Activated CD4-positive, alpha-beta T cell treated with anti-CD3 and anti-CD28 coated beads for 36 hours (primary cell): ENCODE measurements at regions of chr17 and their contacts with region 1.

Region 1: DNA sequence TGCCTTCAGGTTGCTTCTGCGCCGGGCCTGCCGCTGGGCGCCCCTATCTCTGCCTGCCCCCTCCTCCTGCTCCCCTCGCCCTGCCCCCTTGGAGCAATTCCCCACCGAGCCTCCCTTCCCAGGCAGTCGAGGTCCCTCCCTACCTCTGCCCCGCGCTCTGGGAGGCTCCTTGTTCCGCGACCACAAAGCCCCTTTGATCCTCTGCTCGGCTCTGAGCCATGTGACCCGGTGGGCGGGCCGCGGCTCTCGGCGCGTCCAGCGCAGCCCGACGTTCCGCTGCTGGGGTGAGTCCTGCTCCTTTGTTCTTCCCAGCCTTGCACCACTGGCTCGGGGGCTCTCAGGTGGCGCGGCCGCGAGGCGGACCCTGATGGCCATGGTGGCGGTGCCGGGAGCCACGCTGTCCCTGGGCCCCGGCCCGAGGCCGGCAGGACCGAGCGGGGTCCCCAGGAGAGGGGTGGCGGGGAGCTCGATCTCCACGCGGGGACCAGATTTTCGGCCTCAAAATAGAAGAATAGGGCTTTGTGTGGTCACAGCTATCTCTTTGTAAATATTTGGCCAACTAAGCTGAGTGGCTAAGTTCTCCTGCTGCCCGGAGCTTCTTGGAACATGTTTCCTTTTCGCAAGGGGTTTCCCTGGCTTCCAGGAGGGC is 310.6 kb downstream of the SEC14L1 start:
- DNase-seq: peak; percentile 85
- ATAC-seq: peak; percentile 24
- H3K4me3 Mint-ChIP-seq: peak overlapping the region; percentile 96
- H3K27ac Mint-ChIP-seq: peak overlapping the region; percentile 98
- H3K4me1 Mint-ChIP-seq: peaks cover 47% of the 10 kb centered on the region
- H3K27me3 Mint-ChIP-seq: no peaks in the 10 kb centered on the region

Region 2: GRCh38 chr17:76726231-76726775 is 725.1 kb before region 1 on chr17 and contains the start of gene JMJD6:
- CTCF ChIA-PET with region 1: no interaction called
- POLR2A ChIA-PET with region 1: no interaction called
- intact Hi-C with region 1: loop called in 1 of 2 experiments (anchors 5 kb)
- DNase-seq: peak; percentile 97
- ATAC-seq: peak; percentile 87
- H3K4me3 Mint-ChIP-seq: peak within 1 kb of the TSS; percentile 97
- H3K27ac Mint-ChIP-seq: peak within 1 kb of the TSS; percentile 98
- H3K4me1 Mint-ChIP-seq: peaks cover 54% of the 10 kb centered on the region
- H3K27me3 Mint-ChIP-seq: no peaks in the 10 kb centered on the region
- total RNA-seq, gene JMJD6: 51.3 to 65.5 TPM

Region 3: GRCh38 chr17:76982408-76983074 is 468.8 kb before region 1 on chr17:
- CTCF ChIA-PET with region 1: no interaction called
- POLR2A ChIA-PET with region 1: no interaction called
- intact Hi-C with region 1: no loop called
- DNase-seq: peak; percentile 32
- ATAC-seq: peak; percentile 47
- H3K4me3 Mint-ChIP-seq: no peak overlapping the region
- H3K27ac Mint-ChIP-seq: peak overlapping the region; percentile 70
- H3K4me1 Mint-ChIP-seq: peaks cover 20% of the 10 kb centered on the region
- H3K27me3 Mint-ChIP-seq: no peaks in the 10 kb centered on the region

Region 4: DNA sequence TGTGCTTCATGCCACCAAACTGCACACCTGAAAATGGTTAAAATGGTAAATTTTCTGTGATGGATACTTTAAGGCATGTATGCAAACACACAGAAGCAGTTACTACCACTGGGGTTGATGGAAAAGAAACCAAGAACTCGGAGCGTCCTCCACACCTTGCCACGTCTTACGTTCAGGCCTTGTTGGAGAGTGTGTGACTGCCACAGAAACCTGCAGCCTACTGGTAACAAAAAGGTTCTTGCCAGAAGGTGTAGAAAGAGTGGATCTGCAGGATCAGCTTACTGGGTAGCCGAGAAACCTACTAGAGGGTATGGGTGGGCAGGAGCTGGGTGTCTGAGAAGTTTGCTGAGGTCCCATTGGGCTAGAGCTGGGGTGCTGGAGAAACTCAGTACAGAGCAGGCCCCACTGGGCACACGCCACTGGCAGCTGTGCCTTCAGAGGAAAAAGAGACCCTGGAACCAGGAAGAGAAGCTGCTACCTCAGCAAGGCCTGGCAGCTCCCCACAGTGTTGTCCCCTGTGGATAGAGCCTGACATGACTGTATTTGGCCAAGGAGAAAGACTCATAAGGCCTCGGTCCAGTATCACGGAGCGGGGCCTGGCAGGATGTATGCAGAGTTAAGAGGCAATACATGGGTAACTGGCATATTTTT is 106.0 kb before region 1 on chr17:
- CTCF ChIA-PET with region 1: no interaction called
- POLR2A ChIA-PET with region 1: no interaction called
- intact Hi-C with region 1: no loop called
- DNase-seq: no peak
- ATAC-seq: no peak
- H3K4me3 Mint-ChIP-seq: no peak overlapping the region
- H3K27ac Mint-ChIP-seq: no peak overlapping the region
- H3K4me1 Mint-ChIP-seq: peaks cover 51% of the 10 kb centered on the region
- H3K27me3 Mint-ChIP-seq: no peaks in the 10 kb centered on the region

Region 5: DNA sequence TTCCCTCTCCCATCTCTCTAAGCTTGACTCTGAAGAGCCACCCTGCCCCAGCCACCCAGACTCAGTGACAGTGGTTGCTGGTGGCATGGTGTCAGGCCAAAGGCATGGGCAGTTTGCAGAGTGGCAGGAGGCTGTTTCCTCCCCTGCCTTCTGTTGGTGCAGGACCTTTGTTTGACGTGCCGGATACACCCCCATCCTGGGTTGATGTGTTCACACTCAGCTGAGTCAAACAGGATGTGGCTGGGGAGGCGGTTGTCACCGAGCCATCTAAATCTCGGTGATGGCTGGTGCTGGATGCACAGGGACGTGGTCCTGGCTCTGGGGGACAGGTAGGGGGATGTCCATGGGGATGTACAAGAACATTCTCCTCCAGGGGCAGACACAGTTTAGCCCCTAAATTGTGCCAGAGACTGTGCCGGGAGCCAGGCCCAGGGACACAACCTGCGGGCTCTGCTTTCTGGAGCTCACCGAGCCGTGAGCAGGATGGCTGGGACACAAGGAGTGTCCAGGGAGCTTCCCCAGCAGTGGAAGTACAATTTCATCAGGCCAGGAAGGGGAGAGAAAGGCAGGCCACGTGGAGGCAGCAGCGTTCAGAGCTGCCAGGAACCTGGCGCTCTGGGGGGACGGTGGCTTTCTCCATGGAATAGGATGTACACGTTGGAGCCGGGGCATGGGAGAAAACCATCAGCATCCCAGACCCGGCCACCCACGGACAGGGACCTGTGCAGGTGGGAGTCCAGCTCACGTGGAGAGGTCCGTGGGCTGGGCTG is 46.4 kb before region 1 on chr17:
- CTCF ChIA-PET with region 1: interaction called, 15 read pairs
- POLR2A ChIA-PET with region 1: no interaction called
- intact Hi-C with region 1: loop called (anchors 2 to 5 kb)
- DNase-seq: peak; percentile 93
- ATAC-seq: peak; percentile 79
- H3K4me3 Mint-ChIP-seq: peak overlapping the region; percentile 95
- H3K27ac Mint-ChIP-seq: peak overlapping the region; percentile 89
- H3K4me1 Mint-ChIP-seq: peaks cover 95% of the 10 kb centered on the region
- H3K27me3 Mint-ChIP-seq: no peaks in the 10 kb centered on the region

Region 6: GRCh38 chr17:77465358-77466041 is 14.1 kb after region 1 on chr17:
- CTCF ChIA-PET with region 1: interaction called, 8 read pairs
- POLR2A ChIA-PET with region 1: interaction called, 5 read pairs
- intact Hi-C with region 1: loop called in 1 of 2 experiments (anchors 1 kb)
- DNase-seq: peak; percentile 90
- ATAC-seq: peak; percentile 83
- H3K4me3 Mint-ChIP-seq: peak overlapping the region; percentile 62
- H3K27ac Mint-ChIP-seq: peak overlapping the region; percentile 98
- H3K4me1 Mint-ChIP-seq: peaks cover 90% of the 10 kb centered on the region
- H3K27me3 Mint-ChIP-seq: no peaks in the 10 kb centered on the region

Region 7: DNA sequence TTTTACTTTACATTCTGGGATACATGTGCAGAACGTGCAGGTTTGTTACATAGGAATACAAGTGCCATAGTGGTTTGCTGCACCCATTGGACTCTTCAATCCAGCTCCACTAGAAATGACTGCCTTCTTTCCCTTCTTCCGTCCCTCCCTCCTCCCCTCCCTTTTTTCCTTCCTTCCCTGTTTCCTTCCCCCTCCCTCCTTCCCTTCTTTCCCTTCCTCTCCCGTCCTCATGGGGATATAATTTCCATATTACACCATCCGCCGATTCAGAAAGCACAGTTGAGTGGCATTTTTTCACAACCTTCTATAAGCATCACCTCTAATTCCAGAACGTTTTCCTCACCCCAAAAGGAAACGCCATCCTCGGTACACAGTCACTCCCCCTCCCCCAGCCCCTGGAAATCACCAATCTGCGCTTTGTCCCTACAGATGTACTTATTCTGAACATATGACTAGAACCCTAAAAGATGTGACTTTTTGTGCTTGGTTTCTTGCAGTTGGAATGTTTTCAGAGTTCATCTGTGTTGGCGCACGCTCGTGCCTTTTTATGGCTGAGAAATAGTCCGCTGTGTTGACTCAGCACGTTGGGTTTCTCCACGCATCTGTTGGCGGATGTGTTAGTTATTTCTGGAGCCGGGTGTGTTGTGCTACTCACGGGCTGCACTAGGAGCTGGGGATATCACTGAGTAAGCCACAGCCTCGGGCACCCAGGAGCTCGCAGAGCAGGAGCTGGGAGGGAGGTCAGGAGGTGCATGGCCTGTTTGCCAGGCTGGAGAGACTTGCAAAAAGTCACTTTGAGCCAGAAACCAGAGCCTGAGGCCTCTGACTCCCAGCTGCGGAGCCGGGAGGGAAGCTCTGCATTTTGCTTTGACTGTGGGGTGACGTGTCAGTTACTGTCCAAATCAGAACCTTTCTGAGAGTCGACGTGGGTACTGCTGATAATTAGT is 25.8 kb after region 1 on chr17:
- CTCF ChIA-PET with region 1: interaction called, 21 read pairs
- POLR2A ChIA-PET with region 1: interaction called, 4 read pairs
- intact Hi-C with region 1: no loop called
- DNase-seq: peak; percentile 74
- ATAC-seq: peak; percentile 33
- H3K4me3 Mint-ChIP-seq: peak overlapping the region; percentile 24
- H3K27ac Mint-ChIP-seq: peak overlapping the region; percentile 80
- H3K4me1 Mint-ChIP-seq: peaks cover 78% of the 10 kb centered on the region
- H3K27me3 Mint-ChIP-seq: no peaks in the 10 kb centered on the region

Region 8: DNA sequence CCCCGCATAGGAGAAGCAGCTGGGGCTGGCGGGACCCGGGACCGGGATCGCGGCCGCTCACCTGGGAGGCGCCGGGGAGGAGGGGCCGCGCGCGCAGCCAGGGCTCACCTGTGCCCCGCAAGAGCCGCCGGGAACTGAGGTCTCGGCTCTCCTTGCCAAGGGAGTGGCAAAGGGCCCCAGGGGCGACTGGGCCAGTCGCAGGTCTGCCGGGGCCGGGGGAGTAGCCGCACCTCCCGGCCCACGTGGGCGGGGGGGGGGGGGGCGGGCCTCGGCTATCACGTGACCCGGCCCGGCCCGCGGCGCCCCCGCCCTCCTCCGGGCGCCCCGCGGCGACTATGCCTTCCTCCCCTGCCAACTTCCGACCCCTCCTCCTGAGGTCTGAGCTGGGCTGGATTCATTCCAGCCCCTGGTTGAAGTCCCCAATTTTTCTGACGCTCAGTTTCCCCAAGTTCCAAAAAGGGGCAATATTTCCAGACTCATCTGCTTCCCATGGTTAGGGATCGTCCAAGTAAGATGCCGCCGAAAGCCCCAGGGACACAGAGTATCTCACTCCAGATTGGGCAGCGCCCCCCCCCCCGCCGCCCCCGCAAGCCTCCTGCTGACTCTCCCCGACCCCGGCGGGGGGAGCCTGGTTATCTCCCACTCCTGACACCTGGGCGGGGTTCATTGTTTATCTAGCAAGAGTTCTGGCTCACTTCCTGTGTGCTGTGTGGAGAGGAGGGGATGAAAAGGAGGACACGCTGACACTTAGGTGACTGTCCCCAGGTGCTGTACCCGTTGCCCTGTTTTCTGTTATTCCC is 677.4 kb after region 1 on chr17 and contains the start of gene TMC6:
- CTCF ChIA-PET with region 1: no interaction called
- POLR2A ChIA-PET with region 1: no interaction called
- intact Hi-C with region 1: loop called in 1 of 2 experiments (anchors 10 kb)
- DNase-seq: peak; percentile 87
- ATAC-seq: peak; percentile 31
- H3K4me3 Mint-ChIP-seq: peak within 1 kb of the TSS; percentile 94
- H3K27ac Mint-ChIP-seq: peak within 1 kb of the TSS; percentile 96
- H3K4me1 Mint-ChIP-seq: peaks cover 52% of the 10 kb centered on the region
- H3K27me3 Mint-ChIP-seq: no peaks in the 10 kb centered on the region
- total RNA-seq, gene TMC6: 138 to 145 TPM

Region 9: DNA sequence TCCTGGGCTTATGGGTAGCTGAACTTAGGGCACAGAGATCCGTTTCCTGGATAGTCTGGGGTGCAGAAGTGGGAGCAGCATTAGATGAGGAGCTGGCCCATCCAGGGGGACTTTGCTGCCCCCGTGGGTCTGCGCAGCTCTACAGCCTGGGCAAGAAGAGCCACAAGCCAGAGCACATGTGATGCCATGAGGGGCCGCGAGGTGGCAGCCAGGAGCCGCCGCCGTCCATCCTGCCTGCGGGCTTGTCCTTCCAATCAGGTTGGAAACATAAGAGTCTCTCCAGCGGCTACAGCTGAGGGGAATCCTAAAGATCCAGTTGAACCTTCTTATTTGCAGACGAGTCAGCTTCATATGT is 1594.5 kb after region 1 on chr17:
- CTCF ChIA-PET with region 1: no interaction called
- POLR2A ChIA-PET with region 1: no interaction called
- intact Hi-C with region 1: no loop called
- DNase-seq: peak; percentile 81
- ATAC-seq: peak; percentile 95
- H3K4me3 Mint-ChIP-seq: no peak overlapping the region
- H3K27ac Mint-ChIP-seq: no peak overlapping the region
- H3K4me1 Mint-ChIP-seq: no peaks in the 10 kb centered on the region
- H3K27me3 Mint-ChIP-seq: peaks cover 7% of the 10 kb centered on the region